Endothelial cell of umbilical vein (primary cell): ENCODE measurements at regions of chr5 and their contacts with region 1.

Region 1: GRCh38 chr5:138035605-138036537 is 3.0 kb upstream of the FAM13B start:
- DNase-seq: peak; percentile 87
- H3K4me3 ChIP-seq: no peak overlapping the region
- H3K27ac ChIP-seq: no peak overlapping the region
- H3K4me1 ChIP-seq: peaks cover 10% of the 10 kb centered on the region
- H3K27me3 ChIP-seq: no peaks in the 10 kb centered on the region
- CTCF ChIP-seq: peak; percentile 74 to 84
- POLR2A ChIP-seq: no peak

Region 2: DNA sequence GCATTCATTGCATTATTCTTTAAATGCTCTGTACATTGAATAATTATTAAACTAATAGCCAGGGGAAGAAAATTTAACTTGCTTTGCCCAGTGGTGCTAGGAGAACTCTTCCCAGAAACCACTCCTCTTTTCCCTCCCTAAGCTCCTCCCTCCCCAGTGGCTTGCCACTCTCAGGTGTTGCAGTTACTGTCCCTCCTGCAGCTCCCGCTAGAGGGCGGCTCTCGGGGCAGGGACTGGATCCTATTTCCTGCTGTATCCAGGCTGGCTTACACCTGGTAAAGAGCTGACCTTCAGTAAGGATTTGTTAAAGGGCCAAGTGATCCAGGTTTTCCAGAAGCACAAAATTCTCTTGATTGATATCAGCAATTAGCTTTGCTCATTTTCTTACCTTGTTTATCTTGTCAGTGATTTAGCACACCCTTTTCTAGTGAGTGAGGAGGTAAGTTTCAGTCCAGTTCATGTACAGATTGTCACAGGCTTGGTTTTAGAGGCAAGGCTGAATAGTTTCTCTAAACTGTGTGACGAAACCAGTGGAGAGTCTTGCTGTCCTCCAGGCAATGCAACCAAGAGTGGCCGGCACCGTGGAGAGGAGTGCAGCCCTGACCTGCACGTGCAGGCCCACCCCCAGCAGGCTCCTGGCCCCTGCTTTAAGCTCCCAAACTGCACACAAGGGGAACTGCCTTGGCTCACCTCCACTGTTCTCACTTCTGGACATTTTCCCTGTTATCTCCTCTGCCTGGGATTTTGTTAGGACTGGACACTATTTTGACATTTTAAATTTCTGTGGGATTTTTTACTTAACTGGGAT is 960.5 kb before region 1 on chr5:
- CTCF ChIA-PET with region 1: no interaction called
- POLR2A ChIA-PET with region 1: no interaction called
- dilution Hi-C with region 1: no loop called
- intact Hi-C with region 1: no loop called
- DNase-seq: peak; percentile 33
- H3K4me3 ChIP-seq: no peak overlapping the region
- H3K27ac ChIP-seq: no peak overlapping the region
- H3K4me1 ChIP-seq: peaks cover 27% of the 10 kb centered on the region
- H3K27me3 ChIP-seq: no peaks in the 10 kb centered on the region
- CTCF ChIP-seq: peak; percentile 53 to 65
- POLR2A ChIP-seq: no peak

Region 3: DNA sequence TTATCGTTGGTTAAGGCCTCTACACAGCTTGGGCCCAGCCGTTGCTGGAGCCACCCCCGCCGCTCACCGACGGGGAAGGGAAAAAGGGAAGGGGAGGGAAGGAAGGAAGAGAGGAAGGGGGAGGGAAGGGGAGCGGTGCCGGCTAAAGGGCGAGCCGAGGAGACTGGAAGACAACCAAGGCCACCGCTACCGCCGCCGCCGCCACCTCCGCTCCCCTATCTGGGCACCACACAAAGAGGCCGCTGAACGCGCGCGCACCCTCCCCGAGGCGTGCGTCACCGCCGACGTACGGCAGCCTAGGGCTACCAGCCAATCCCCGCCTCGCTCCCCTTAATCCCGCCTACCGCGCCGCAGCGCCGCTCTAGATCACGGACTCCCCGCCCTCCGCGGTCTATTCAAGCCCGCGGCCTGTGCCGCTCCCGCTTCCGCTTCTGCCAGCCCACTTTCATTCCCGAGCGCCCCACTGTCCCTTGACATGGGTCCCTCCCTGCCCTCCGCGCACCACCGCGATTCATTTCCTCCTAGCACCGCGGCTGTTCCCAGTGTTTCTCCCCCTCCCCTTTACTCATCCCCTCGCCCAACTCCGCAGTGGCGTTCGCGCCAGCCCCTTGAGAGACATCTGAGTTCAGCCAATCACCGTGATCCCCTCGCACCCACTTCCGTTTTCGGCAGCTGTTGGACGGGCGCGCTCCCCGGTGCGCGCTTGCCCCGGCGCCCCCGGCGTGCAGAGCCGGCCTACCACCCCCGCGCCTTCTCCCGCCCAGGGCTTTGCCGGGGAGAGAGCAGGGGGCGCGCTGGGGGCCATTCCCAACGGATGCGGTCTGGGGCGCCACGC is 281.5 kb before region 1 on chr5 and contains the start of gene HNRNPA0:
- CTCF ChIA-PET with region 1: interaction called, 4 read pairs
- POLR2A ChIA-PET with region 1: no interaction called
- dilution Hi-C with region 1: no loop called
- intact Hi-C with region 1: loop called (anchors 1 kb)
- DNase-seq: peak; percentile 98
- H3K4me3 ChIP-seq: peak within 1 kb of the TSS; percentile 88 to 99 (median 94)
- H3K27ac ChIP-seq: peak within 1 kb of the TSS; percentile 92
- H3K4me1 ChIP-seq: peaks cover 18% of the 10 kb centered on the region
- H3K27me3 ChIP-seq: peaks cover 0 to 2% of the 10 kb centered on the region in 2 experiments
- CTCF ChIP-seq: no peak
- POLR2A ChIP-seq: peak; percentile 97
- total RNA-seq, gene HNRNPA0: 37.5 and 37.9 TPM in 2 replicates

Region 4: DNA sequence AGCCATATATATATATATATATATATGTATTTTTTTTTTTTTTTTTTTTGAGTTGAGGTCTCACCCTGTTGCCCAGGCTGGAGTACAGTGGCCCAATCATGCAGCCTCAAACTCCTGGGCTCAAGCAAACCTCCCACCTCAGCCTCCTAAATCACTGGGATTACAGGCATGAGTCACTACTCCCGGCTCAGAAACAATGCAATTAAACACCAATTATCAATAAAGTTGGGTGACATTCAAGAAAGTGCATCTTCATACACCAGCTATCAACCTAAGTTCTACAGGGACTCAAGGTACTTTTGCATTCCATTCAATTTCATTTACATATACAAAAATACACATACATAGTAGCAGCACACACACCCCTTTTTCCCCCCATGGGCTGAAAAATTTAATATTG is 10.6 kb before region 1 on chr5:
- CTCF ChIA-PET with region 1: interaction called, 17 read pairs
- POLR2A ChIA-PET with region 1: no interaction called
- dilution Hi-C with region 1: no loop called
- intact Hi-C with region 1: no loop called
- DNase-seq: no peak
- H3K4me3 ChIP-seq: no peak overlapping the region
- H3K27ac ChIP-seq: no peak overlapping the region
- H3K4me1 ChIP-seq: no peaks in the 10 kb centered on the region
- H3K27me3 ChIP-seq: no peaks in the 10 kb centered on the region
- CTCF ChIP-seq: no peak
- POLR2A ChIP-seq: no peak

Region 5: GRCh38 chr5:138065102-138065501 is 29.2 kb after region 1 on chr5:
- CTCF ChIA-PET with region 1: interaction called, 152 read pairs
- POLR2A ChIA-PET with region 1: no interaction called
- dilution Hi-C with region 1: no loop called
- intact Hi-C with region 1: loop called (anchors 1 kb)
- DNase-seq: no peak
- H3K4me3 ChIP-seq: no peak overlapping the region
- H3K27ac ChIP-seq: no peak overlapping the region
- H3K4me1 ChIP-seq: no peaks in the 10 kb centered on the region
- H3K27me3 ChIP-seq: no peaks in the 10 kb centered on the region
- CTCF ChIP-seq: peak; percentile 16 to 44
- POLR2A ChIP-seq: no peak

Region 6: DNA sequence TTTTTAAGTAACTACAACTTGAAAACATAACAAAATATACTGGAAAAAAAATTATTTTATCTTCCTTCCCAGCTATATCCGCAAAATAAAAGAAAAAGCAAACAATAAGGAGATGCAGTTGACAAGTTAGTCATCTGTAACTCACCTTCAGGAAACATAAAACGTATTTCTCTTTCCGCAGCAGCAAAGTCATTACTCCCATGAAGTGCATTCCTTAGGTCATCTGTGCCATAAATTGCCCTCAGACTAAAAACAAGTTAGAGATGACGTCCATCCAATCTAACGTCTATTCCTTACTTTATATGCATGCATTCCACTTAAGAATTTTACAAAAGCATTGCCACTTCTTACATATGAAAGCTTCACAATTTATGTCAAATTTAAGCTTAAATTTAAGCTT is 92.5 kb after region 1 on chr5:
- CTCF ChIA-PET with region 1: interaction called, 32 read pairs
- POLR2A ChIA-PET with region 1: interaction called, 8 read pairs
- dilution Hi-C with region 1: no loop called
- intact Hi-C with region 1: loop called (anchors 1 kb)
- DNase-seq: peak; percentile 70
- H3K4me3 ChIP-seq: no peak overlapping the region
- H3K27ac ChIP-seq: no peak overlapping the region
- H3K4me1 ChIP-seq: peaks cover 8% of the 10 kb centered on the region
- H3K27me3 ChIP-seq: no peaks in the 10 kb centered on the region
- CTCF ChIP-seq: no peak
- POLR2A ChIP-seq: no peak